ENCODE measurements at regions of chr19 and their contacts with region 1.

Region 1: DNA sequence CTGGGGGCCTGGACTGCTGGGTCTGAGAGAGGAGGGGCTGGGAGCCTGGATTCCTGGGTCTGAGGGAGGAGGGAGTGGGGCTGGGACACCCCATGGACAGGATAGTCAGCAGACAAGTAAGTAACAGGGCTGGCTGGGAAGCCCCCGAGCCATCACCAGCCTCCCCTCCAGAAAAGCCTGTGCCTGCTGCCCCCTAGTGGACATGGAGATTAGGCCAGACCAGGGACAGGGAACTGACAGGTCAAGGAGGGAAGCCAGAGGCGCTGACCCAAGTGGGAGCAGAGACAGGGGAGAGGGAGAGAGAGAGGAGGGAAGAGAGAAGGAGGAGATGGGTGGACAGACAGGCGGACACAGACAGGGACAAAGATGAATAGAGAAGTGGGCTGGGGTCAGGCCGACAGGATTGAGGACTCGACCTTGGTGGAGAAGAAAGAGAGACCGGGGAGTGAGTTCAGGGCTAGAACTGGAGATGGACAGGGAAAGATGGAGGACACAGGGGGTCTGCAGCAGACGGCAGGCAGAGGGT is 6.7 kb upstream of the ERFL start:
- DNase-seq: peak; percentile 87 to 90
- H3K4me3 ChIP-seq: no peak overlapping the region
- H3K4me3 Mint-ChIP-seq: no peak overlapping the region
- H3K27ac Mint-ChIP-seq: no peak overlapping the region
- H3K4me1 ChIP-seq: peaks cover 16% of the 10 kb centered on the region
- H3K4me1 Mint-ChIP-seq: peaks cover 23% of the 10 kb centered on the region
- H3K27me3 ChIP-seq: no peaks in the 10 kb centered on the region
- H3K27me3 Mint-ChIP-seq: peaks cover 10% of the 10 kb centered on the region
- CTCF ChIP-seq: peak; percentile 88 to 93

Region 2: DNA sequence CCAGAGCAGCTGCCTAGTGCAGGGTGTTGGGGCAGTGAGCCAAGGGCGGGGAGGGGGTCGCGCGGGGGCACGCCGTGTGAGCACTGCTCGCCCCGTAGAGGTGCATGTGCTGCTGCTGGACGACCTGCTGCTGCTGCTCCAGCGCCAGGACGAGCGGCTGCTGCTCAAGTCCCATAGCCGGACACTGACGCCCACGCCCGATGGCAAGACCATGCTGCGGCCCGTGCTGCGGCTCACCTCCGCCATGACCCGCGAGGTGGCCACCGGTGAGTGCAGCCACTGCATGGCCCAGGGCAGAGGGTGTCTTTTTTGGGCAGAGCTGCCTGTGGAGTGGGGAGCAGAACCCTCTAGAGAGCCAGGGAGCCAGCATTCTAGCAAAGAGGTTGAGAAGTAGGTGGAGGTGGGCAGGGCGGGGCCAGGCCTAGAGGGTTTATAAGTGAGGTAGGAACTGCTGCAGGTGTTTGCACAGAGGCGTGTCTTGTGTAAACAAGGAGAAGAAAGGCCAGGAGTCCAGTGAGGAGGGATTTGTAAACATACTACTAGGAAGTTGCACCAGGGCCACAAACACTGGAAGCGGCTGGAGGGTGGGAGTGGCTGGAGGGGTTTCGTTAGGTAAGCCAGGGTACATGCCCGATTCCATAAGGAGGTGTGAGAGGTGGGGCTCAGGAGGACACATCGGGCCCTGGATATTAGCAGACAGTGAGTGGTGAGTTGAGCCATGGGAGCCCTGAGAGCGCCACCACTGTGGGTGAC is 30.6 kb before region 1 on chr19:
- CTCF ChIA-PET with region 1: interaction called, 6 read pairs
- POLR2A ChIA-PET with region 1: no interaction called
- intact Hi-C with region 1: loop called (anchors 1 kb)
- DNase-seq: peak; percentile 92 to 97
- H3K4me3 ChIP-seq: no peak overlapping the region
- H3K4me3 Mint-ChIP-seq: peak overlapping the region; percentile 71
- H3K27ac Mint-ChIP-seq: peak overlapping the region; percentile 98
- H3K4me1 ChIP-seq: peaks cover 26% of the 10 kb centered on the region
- H3K4me1 Mint-ChIP-seq: peaks cover 28% of the 10 kb centered on the region
- H3K27me3 ChIP-seq: no peaks in the 10 kb centered on the region
- H3K27me3 Mint-ChIP-seq: no peaks in the 10 kb centered on the region
- CTCF ChIP-seq: no peak

Region 3: GRCh38 chr19:41951686-41952172 is 16.8 kb after region 1 on chr19:
- CTCF ChIA-PET with region 1: interaction called, 3 read pairs
- POLR2A ChIA-PET with region 1: no interaction called
- intact Hi-C with region 1: loop called (anchors 1 kb)
- DNase-seq: peak; percentile 84 to 89
- H3K4me3 ChIP-seq: no peak overlapping the region
- H3K4me3 Mint-ChIP-seq: no peak overlapping the region
- H3K27ac Mint-ChIP-seq: no peak overlapping the region
- H3K4me1 ChIP-seq: no peaks in the 10 kb centered on the region
- H3K4me1 Mint-ChIP-seq: no peaks in the 10 kb centered on the region
- H3K27me3 ChIP-seq: no peaks in the 10 kb centered on the region
- H3K27me3 Mint-ChIP-seq: no peaks in the 10 kb centered on the region
- CTCF ChIP-seq: peak; percentile 98 to 99